ENCODE measurements at regions of chr17 and their contacts with region 1.

Region 1: DNA sequence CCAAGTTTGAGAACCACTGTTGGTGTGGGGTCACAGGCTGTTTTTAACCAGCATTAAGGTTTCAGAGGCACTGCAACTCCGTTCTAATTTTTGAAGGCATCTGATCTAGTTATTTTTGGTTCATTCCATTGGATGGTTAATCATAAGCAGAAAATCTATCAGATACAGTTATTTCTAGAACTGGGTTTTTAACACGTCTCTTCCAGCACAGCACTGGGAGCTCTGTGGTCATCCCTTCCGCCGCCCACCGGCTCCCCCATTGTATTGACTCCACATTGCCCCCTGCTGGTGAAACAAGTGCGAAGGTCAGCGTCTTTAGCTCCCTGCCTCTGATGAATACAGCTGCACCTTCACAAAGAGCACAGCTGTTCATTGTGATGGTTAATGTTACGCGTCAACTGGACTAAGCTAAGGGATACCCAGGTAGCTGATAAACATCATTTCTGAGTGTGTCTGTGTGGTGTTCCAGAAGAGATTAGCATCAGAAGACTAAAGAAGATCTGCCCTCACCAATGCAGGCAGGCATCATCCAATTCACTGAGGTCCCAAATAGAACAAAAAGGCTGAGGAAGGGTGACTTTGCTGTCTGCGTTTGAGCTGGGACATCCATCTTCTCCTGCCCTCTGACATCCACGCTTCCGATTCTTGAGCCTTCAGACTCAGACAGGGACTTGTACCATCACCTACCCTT is 8.5 kb downstream of the CCL18 start:
- DNase-seq: peak; percentile 50 to 58 (median 57)
- H3K4me3 ChIP-seq: no peak overlapping the region
- H3K27ac ChIP-seq: no peak overlapping the region
- H3K4me1 ChIP-seq: peaks cover 0 to 7% (median 0%) of the 10 kb centered on the region in 4 experiments
- H3K27me3 ChIP-seq: no peaks in the 10 kb centered on the region

Region 2: GRCh38 chr17:35856603-35857002 is 216.0 kb before region 1 on chr17:
- CTCF ChIA-PET with region 1: no interaction called
- POLR2A ChIA-PET with region 1: no interaction called
- DNase-seq: no peak
- H3K4me3 ChIP-seq: no peak overlapping the region
- H3K27ac ChIP-seq: no peak overlapping the region
- H3K4me1 ChIP-seq: no peaks in the 10 kb centered on the region
- H3K27me3 ChIP-seq: no peaks in the 10 kb centered on the region

Region 3: GRCh38 chr17:35915153-35915969 is 157.2 kb before region 1 on chr17:
- CTCF ChIA-PET with region 1: no interaction called
- POLR2A ChIA-PET with region 1: no interaction called
- DNase-seq: peak in 2 of 3 donors; percentile 33 to 42
- H3K4me3 ChIP-seq: no peak overlapping the region
- H3K27ac ChIP-seq: no peak overlapping the region
- H3K4me1 ChIP-seq: peaks cover 0 to 8% (median 7%) of the 10 kb centered on the region in 4 experiments
- H3K27me3 ChIP-seq: peaks cover 0 to 3% (median 0%) of the 10 kb centered on the region in 5 experiments

Region 4: DNA sequence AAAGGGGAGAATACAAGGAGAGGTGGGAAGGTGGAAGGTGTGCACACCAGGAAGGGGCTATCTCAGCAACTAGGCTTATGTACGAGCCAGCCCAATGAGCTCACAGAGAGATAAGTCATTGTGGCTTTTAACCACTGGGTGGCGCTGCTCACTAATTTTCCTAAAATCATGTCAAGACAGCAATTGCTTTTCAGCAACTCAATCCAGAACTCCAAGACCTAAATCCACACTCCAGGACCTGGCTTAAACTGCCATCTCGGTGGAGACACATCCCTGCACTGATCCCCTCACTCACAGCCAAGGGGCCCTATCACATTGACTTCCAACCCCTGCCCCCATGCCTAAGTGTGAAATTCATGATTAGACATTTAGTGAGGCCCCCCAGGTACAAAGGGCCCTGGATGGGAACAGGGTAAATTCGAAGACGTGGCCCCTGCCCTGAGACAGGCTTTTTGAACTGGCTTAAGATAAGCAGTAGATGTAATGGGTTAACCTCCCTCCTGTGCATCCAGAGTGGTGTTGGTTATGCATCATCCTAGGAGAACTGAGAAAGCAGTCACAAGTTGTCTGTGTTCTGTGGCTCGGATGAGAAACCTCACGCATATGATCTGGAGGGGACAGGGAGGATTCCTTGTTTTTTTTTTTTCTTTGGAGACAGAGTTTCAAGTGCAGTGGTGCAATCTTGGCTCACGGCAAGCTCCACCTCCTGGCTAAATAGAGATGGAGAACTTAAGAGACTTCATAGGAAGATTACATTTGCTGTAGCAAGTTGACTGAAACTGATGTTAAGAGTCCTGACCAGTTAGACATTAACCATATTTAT is 102.8 kb before region 1 on chr17:
- CTCF ChIA-PET with region 1: interaction called, 10 read pairs
- POLR2A ChIA-PET with region 1: no interaction called
- DNase-seq: peak; percentile 78 to 87 (median 79)
- H3K4me3 ChIP-seq: no peak overlapping the region
- H3K27ac ChIP-seq: no peak overlapping the region
- H3K4me1 ChIP-seq: peaks cover 0 to 6% (median 3%) of the 10 kb centered on the region in 4 experiments
- H3K27me3 ChIP-seq: no peaks in the 10 kb centered on the region

Region 5: DNA sequence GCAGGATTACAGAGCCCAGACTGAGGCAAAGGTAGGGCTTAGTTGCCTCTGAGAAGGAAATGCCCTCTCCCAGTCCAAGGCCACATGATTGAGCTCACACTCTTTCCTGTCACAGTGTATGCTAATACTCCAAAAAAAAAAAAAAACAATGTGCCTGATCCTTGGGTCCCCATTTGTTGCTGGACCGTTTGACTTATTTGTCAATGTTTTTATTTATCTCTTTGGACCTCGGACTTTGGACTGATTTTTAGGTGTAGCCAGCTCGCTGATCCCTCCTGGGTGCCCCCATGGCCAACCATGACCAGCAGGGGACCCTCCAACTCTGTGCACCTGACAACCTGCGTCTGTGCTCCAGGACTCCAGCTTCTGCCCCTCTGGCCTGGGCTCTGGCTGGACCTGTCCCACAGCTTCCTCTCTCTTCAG is 90.7 kb before region 1 on chr17:
- CTCF ChIA-PET with region 1: interaction called, 46 read pairs
- POLR2A ChIA-PET with region 1: no interaction called
- DNase-seq: peak in 2 of 3 donors; percentile 20 to 27
- H3K4me3 ChIP-seq: no peak overlapping the region
- H3K27ac ChIP-seq: no peak overlapping the region
- H3K4me1 ChIP-seq: no peaks in the 10 kb centered on the region
- H3K27me3 ChIP-seq: no peaks in the 10 kb centered on the region

Region 6: GRCh38 chr17:36059406-36059805 is 13.2 kb before region 1 on chr17:
- CTCF ChIA-PET with region 1: interaction called, 12 read pairs
- POLR2A ChIA-PET with region 1: no interaction called
- DNase-seq: no peak
- H3K4me3 ChIP-seq: no peak overlapping the region
- H3K27ac ChIP-seq: no peak overlapping the region
- H3K4me1 ChIP-seq: no peaks in the 10 kb centered on the region
- H3K27me3 ChIP-seq: no peaks in the 10 kb centered on the region

Region 7: GRCh38 chr17:36085765-36086164 is 13.2 kb after region 1 on chr17:
- CTCF ChIA-PET with region 1: interaction called, 14 read pairs
- POLR2A ChIA-PET with region 1: no interaction called
- DNase-seq: peak; percentile 25 to 77 (median 64)
- H3K4me3 ChIP-seq: no peak overlapping the region
- H3K27ac ChIP-seq: no peak overlapping the region
- H3K4me1 ChIP-seq: peaks cover 11 to 56% (median 46%) of the 10 kb centered on the region in 4 experiments
- H3K27me3 ChIP-seq: no peaks in the 10 kb centered on the region

Region 8: GRCh38 chr17:36183001-36183971 is 110.7 kb after region 1 on chr17:
- CTCF ChIA-PET with region 1: no interaction called
- POLR2A ChIA-PET with region 1: no interaction called
- DNase-seq: peak in 2 of 3 donors; percentile 42 to 70
- H3K4me3 ChIP-seq: peak overlapping the region in 6 of 7 experiments; percentile 41 to 94 (median 66)
- H3K27ac ChIP-seq: peak overlapping the region in 1 of 2 experiments; percentile 58
- H3K4me1 ChIP-seq: peaks cover 25 to 56% (median 33%) of the 10 kb centered on the region in 4 experiments
- H3K27me3 ChIP-seq: peaks cover 0 to 26% (median 0%) of the 10 kb centered on the region in 5 experiments

Region 9: GRCh38 chr17:36717088-36717487 is 644.5 kb after region 1 on chr17:
- CTCF ChIA-PET with region 1: no interaction called
- POLR2A ChIA-PET with region 1: no interaction called
- DNase-seq: no peak
- H3K4me3 ChIP-seq: no peak overlapping the region
- H3K27ac ChIP-seq: no peak overlapping the region
- H3K4me1 ChIP-seq: peaks cover 4 to 11% (median 9%) of the 10 kb centered on the region in 4 experiments
- H3K27me3 ChIP-seq: peaks cover 0 to 12% (median 0%) of the 10 kb centered on the region in 5 experiments